ENCODE measurements at regions of chr3 and their contacts with region 1.

Region 1: DNA sequence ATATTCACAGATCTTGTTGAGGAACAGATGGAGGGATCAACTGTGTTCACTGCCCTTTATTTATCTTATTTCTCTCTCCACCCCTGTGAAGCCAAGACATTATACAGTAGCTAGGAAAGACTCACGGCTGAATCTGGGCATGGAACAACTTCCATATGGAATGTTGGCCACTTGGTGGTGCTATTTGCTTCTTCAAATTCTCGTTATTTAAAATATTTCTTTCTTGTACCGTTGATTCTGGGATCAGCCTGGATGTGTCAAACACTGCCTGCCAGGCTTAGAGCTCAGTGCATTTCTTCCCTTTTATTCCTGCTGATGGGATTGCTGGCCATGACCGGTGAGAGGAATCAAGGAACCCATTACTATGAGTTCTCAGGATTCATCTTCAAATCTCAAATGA is 17.5 kb upstream of the GASK1A start:
- DNase-seq: peak in 1 of 2 experiments; percentile 13
- H3K4me3 ChIP-seq: no peak overlapping the region
- H3K27ac ChIP-seq: no peak overlapping the region
- H3K4me1 ChIP-seq: no peaks in the 10 kb centered on the region
- H3K27me3 ChIP-seq: no peaks in the 10 kb centered on the region
- CTCF ChIP-seq: peak; percentile 76

Region 2: GRCh38 chr3:43155464-43156121 is 194.0 kb after region 1 on chr3:
- CTCF ChIA-PET with region 1: interaction called, 6 read pairs
- POLR2A ChIA-PET with region 1: no interaction called
- intact Hi-C with region 1: loop called (anchors 5 kb)
- DNase-seq: peak; percentile 47 to 60
- H3K4me3 ChIP-seq: no peak overlapping the region
- H3K27ac ChIP-seq: no peak overlapping the region
- H3K4me1 ChIP-seq: no peaks in the 10 kb centered on the region
- H3K27me3 ChIP-seq: no peaks in the 10 kb centered on the region
- CTCF ChIP-seq: peak; percentile 70

Region 3: DNA sequence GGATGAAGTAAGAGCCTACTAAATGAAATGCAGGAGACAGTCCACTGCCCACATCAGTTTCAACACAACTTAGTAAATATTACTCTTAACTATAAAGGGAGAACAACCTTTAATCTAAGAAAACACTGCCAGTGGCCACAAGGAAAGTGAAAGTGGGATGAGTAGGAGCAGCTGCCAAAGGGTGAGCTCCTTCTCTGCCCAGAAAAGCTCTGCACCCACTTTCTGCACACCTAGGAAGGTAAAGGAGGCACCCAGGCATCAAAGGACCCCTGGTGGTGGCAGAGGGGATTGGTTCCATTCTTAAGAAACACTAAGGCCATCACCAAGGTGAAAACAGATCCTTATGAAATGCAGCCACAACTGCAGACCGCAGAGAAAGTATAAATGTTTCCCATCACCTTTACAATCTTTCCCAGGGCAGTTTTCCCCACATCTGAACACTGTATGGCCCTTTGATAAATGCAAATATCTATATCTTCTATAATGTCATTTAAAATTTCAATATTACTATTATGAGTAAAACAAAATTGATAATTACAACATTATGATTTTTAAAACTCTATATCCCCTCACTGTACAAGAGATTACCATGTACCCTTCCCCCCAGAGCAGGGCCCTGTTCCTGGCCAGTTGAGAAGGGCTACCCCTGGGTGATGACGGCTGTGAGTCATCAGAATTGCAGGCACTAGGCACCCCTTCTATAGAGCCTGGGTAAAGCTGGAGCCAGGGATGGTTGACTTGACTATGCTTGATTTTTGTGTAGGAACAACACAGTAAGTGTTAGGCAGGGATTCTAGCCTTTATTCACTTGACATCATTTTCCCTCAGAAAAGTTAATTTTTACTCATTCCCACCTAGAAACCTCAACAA is 416.7 kb after region 1 on chr3:
- CTCF ChIA-PET with region 1: interaction called, 5 read pairs
- POLR2A ChIA-PET with region 1: no interaction called
- intact Hi-C with region 1: loop called (anchors 1 kb)
- DNase-seq: peak; percentile 27 to 39
- H3K4me3 ChIP-seq: no peak overlapping the region
- H3K27ac ChIP-seq: no peak overlapping the region
- H3K4me1 ChIP-seq: no peaks in the 10 kb centered on the region
- H3K27me3 ChIP-seq: no peaks in the 10 kb centered on the region
- CTCF ChIP-seq: peak; percentile 71

Region 4: DNA sequence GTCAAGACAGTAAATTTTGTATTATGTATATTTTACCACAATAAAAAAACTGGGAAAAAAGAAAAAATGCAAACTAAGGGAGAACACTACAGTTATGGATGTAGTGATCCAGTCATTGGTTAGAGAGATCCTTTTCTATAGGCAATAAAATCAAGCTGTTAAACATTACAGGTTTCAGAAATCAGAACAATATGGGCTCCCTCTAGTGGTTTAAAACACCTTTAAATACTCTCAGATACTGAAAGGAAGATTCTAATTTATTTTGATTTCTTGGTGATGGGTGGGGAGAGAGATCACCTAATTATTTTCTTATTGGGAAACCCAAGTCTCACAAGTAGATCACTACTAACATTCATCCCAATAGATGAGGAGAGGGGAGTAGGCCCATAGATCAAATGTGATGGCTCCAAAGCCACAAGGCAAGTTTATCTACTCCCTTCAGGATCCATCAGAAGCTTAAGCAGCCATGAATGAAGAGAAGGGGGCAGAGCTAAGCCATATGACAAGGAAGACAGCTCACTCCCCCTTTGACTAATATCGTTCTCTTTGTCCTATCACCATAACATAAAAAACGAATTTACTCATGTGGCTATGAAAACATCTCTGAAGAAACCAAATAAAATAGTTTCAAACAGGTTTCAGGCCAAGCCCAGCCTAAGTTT is 541.6 kb after region 1 on chr3:
- CTCF ChIA-PET with region 1: no interaction called
- POLR2A ChIA-PET with region 1: no interaction called
- intact Hi-C with region 1: loop called (anchors 2 kb)
- DNase-seq: no peak
- H3K4me3 ChIP-seq: no peak overlapping the region
- H3K27ac ChIP-seq: no peak overlapping the region
- H3K4me1 ChIP-seq: peaks cover under 1% of the 10 kb centered on the region; the same call in 1 of the 2 replicates
- H3K27me3 ChIP-seq: no peaks in the 10 kb centered on the region
- CTCF ChIP-seq: peak; percentile 73

Region 5: GRCh38 chr3:43769471-43770425 is 808.1 kb after region 1 on chr3:
- CTCF ChIA-PET with region 1: no interaction called
- POLR2A ChIA-PET with region 1: no interaction called
- intact Hi-C with region 1: no loop called
- DNase-seq: peak; percentile 95 to 99
- H3K4me3 ChIP-seq: peak overlapping the region; percentile 34; the same call in 1 of the 2 replicates
- H3K27ac ChIP-seq: peak overlapping the region; percentile 90
- H3K4me1 ChIP-seq: peaks cover 83% of the 10 kb centered on the region
- H3K27me3 ChIP-seq: no peaks in the 10 kb centered on the region
- CTCF ChIP-seq: peak; percentile 92

Region 6: GRCh38 chr3:44198284-44199269 is 1236.9 kb after region 1 on chr3:
- CTCF ChIA-PET with region 1: no interaction called
- POLR2A ChIA-PET with region 1: no interaction called
- intact Hi-C with region 1: loop called (anchors 1 kb)
- DNase-seq: peak; percentile 59 to 78
- H3K4me3 ChIP-seq: no peak overlapping the region
- H3K27ac ChIP-seq: no peak overlapping the region
- H3K4me1 ChIP-seq: no peaks in the 10 kb centered on the region
- H3K27me3 ChIP-seq: no peaks in the 10 kb centered on the region
- CTCF ChIP-seq: peak; percentile 79

Measured in PC-9 (cell line).